ENCODE measurements at regions of chr2 and their contacts with region 1.

Region 1: GRCh38 chr2:120520929-120521912 is 175.3 kb downstream of the INHBB start:
- DNase-seq: peak in 1 of 2 experiments; percentile 46
- H3K4me3 ChIP-seq: no peak overlapping the region
- H3K4me3 Mint-ChIP-seq: no peak overlapping the region
- H3K27ac Mint-ChIP-seq: no peak overlapping the region
- H3K4me1 ChIP-seq: peaks cover 9% of the 10 kb centered on the region
- H3K4me1 Mint-ChIP-seq: peaks cover 16% of the 10 kb centered on the region
- H3K27me3 ChIP-seq: no peaks in the 10 kb centered on the region
- H3K27me3 Mint-ChIP-seq: no peaks in the 10 kb centered on the region
- CTCF ChIP-seq: peak; percentile 62 to 82

Region 2: DNA sequence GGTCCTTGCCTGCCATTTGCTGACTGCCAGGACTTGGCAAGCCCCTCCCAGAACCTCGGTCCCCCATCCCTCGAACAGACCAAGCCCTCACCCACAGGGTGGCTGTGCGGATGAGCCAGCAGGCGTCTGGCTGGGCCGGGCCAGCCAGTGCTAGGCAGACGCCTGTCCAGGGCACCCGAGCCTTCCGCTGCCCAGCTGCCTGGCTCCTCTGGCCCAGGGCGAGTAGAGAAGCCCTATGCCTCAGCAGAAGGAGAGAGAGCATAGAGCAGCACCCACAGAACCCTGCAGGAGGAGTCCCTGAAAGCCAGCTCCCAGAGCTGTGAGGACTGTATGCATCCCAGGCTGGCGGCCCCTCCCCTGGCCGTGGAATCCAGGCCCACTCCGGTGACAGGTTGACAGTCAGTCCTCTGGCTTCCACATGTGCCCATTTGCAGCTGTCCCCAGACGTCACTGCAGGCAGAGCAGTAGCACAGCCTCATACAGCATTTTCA is 152.4 kb after region 1 on chr2:
- CTCF ChIA-PET with region 1: interaction called, 3 read pairs
- POLR2A ChIA-PET with region 1: no interaction called
- intact Hi-C with region 1: loop called (anchors 1 kb)
- DNase-seq: no peak
- H3K4me3 ChIP-seq: no peak overlapping the region
- H3K4me3 Mint-ChIP-seq: no peak overlapping the region
- H3K27ac Mint-ChIP-seq: no peak overlapping the region
- H3K4me1 ChIP-seq: peaks cover 7% of the 10 kb centered on the region; the same call in 1 of the 2 replicates
- H3K4me1 Mint-ChIP-seq: no peaks in the 10 kb centered on the region
- H3K27me3 ChIP-seq: no peaks in the 10 kb centered on the region
- H3K27me3 Mint-ChIP-seq: no peaks in the 10 kb centered on the region
- CTCF ChIP-seq: no peak

Measured in Caco-2 (cell line).